Upper lobe of right lung (tissue), 1 donor: ENCODE measurements at regions of chr6 and their contacts with region 1.

Region 1: GRCh38 chr6:34414999-34415858 is 10.6 kb downstream of the RPS10 start:
- DNase-seq: no peak
- ATAC-seq: peak; percentile 95
- H3K4me3 ChIP-seq: no peak overlapping the region
- H3K27ac ChIP-seq: peak overlapping the region; percentile 20
- H3K4me1 ChIP-seq: peaks cover 6% of the 10 kb centered on the region
- H3K27me3 ChIP-seq: no peaks in the 10 kb centered on the region
- CTCF ChIP-seq: peak; percentile 75

Region 2: DNA sequence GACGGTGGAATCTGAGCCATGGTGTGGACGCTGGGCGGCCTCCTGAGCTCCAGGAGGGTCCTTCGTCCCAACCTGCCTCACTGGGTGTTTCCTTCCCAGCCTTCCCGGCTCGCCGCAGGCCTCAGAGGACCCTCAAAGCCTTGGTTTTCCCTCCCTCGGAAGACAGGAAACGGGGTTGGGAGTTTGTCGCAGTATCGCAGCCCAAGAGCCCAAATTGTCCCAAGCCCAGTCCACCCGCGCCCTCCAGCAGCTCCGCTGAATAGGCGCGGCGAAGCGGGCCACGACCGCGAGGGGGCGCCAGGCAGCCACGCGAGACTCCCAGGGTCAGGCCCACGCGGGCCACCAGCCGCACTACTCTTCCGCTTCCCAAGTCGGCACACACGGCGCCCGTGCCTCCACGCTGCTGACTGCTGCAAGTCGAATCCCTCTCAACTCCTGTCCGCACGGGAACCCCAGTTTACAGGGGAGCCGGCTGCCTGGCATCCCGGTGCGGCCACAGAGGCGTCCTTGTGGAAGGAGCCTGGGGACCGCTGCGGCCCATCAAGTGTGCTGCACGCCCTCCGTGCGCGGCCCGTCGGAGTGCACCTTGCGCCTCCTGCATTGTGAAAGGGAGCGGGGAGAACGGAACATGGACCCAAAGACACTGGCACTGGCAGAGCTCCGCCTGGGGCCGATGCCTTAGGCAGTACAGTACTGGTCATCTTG is 219.0 kb before region 1 on chr6:
- intact Hi-C with region 1: loop called (anchors 5 kb)
- DNase-seq: peak; percentile 95
- ATAC-seq: peak; percentile 99
- H3K4me3 ChIP-seq: peak overlapping the region; percentile 56
- H3K27ac ChIP-seq: no peak overlapping the region
- H3K4me1 ChIP-seq: no peaks in the 10 kb centered on the region
- H3K27me3 ChIP-seq: no peaks in the 10 kb centered on the region
- CTCF ChIP-seq: peak; percentile 96

Region 3: GRCh38 chr6:34248727-34249551 is 166.3 kb before region 1 on chr6 and contains the start of gene SMIM29:
- intact Hi-C with region 1: loop called (anchors 10 kb)
- DNase-seq: peak; percentile 99
- ATAC-seq: peak; percentile 97
- H3K4me3 ChIP-seq: peak within 1 kb of the TSS; percentile 96
- H3K27ac ChIP-seq: peak within 1 kb of the TSS; percentile 93
- H3K4me1 ChIP-seq: peaks cover 23% of the 10 kb centered on the region
- H3K27me3 ChIP-seq: no peaks in the 10 kb centered on the region
- CTCF ChIP-seq: peak; percentile 90
- total RNA-seq, gene SMIM29: 32.6 TPM